ENCODE measurements at regions of chr5 and their contacts with region 1.

Region 1: DNA sequence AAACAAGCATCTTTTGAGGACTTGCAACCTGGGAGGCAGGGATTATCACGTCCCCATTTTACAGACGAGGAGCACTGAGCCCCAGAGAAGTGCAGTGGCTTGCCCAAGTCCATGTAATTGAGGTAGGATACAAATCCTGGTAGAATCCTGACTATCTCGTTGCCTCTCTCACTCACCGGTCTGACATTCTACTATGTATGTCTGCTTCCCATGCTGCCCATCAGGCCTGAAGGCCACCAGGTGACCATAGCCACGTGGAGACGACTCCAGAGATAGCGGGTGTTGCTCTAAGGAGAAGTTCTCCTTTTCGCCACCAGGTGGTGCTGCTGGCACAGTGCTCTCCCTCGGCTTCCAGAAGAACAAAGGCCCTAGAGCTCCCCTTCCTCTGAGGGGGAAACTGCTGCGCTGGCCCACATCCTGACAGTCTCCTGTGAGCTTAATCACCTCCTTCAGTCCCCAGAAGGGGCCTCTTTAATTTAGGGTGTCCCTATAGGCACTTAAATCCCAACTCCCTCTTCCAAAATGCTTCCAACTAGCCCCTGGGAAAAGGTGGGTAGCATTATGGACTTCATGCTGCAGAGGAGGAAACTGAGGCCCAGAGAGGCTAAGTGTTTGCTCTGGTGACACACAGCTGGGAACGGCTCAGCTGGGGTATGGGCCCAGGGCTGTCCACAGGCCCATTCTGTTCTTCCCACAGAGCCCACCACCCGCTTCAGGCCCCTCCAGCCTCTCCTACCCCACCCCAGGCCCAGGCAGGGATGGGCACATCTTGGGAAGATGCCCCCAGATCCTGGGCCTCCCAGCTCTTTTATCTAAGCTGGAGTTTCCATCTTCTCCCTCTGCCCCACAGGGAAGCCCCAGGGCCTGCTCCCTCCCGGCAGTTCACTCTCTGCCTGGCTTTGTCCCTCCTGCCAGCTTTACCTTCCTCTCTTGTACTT is 6.4 kb downstream of the SLC34A1 start:
- DNase-seq: peak; percentile 95
- H3K4me3 ChIP-seq: no peak overlapping the region; a peak in 1 of 4 replicates
- H3K27ac ChIP-seq: no peak overlapping the region
- H3K4me1 ChIP-seq: peaks cover 0 to 3% of the 10 kb centered on the region in 2 experiments; a peak in 1 of 4 replicates
- H3K27me3 ChIP-seq: no peaks in the 10 kb centered on the region
- CTCF ChIP-seq: peak; percentile 88
- EP300 ChIP-seq: no peak
- RAD21 ChIP-seq: peak; percentile 95

Region 2: GRCh38 chr5:177049285-177049684 is 341.3 kb before region 1 on chr5:
- CTCF ChIA-PET with region 1: no interaction called
- POLR2A ChIA-PET with region 1: no interaction called
- DNase-seq: no peak
- H3K4me3 ChIP-seq: peak overlapping the region in 1 of 2 experiments; percentile 1; a peak in 1 of 4 replicates
- H3K27ac ChIP-seq: no peak overlapping the region
- H3K4me1 ChIP-seq: no peaks in the 10 kb centered on the region
- H3K27me3 ChIP-seq: no peaks in the 10 kb centered on the region
- CTCF ChIP-seq: no peak
- EP300 ChIP-seq: no peak
- RAD21 ChIP-seq: peak; percentile 25; the same call in 1 of the 2 replicates

Region 3: DNA sequence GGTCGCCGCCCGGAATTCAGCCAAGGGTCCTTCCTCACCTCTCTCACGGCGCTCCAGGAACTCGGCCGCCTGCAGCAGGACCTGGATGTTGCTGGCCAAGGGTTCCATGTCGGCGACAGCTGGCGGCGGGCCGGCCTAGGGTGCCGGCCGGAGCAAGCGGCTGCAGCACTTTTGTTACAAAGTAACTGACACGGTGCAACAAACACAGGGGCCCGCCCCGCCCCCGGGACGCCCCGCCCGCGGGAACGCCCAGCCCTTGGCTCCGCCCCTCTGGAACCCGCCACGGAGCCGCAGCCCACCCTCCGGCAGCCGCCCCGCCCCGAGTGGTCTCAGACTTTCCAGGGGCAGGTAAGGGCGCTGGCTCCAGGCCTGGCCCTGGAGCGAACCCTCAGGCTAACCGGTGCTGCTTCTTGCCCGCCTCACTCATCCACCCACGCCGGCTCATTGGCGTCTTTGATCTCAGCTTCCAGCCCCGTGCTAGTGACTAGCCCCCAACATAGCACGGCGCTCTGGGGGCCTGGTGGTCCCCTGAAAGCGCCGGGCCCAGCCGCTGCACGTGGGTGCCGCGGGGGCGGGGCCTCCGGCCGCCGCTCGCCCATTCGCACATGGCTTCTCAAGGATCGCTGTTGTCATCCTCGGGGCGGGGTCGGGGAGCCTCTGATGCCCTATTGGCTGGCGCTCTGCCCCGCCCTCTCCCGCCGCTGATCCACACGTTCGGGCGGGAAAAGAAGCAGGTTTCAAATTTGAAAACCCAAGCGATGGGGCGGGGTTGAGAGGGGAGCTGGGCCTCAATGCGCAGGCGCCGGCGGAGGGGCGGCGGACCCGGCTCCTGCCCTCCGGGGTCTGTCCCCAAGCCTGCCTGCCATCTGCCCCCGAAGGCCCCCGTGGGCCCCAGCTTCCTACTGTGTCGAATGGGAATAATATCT is 78.6 kb before region 1 on chr5 and contains the start of gene MXD3:
- CTCF ChIA-PET with region 1: interaction called, 19 read pairs
- POLR2A ChIA-PET with region 1: no interaction called
- DNase-seq: peak; percentile 97
- H3K4me3 ChIP-seq: peak within 1 kb of the TSS; percentile 59 to 84
- H3K27ac ChIP-seq: peak within 1 kb of the TSS; percentile 73 to 88
- H3K4me1 ChIP-seq: peaks cover 4 to 25% of the 10 kb centered on the region in 2 experiments; a peak in 1 of 4 replicates
- H3K27me3 ChIP-seq: no peaks in the 10 kb centered on the region
- CTCF ChIP-seq: no peak
- EP300 ChIP-seq: 0 out of 4 replicates have a peak, but pooled peaks of 1 of the 2 experiments have one; percentile 39
- RAD21 ChIP-seq: no peak
- polyA plus RNA-seq, gene MXD3: 22.6 and 23.1 TPM in 2 replicates

Region 4: GRCh38 chr5:177351385-177352329 is 39.0 kb before region 1 on chr5 and contains the start of gene LMAN2:
- CTCF ChIA-PET with region 1: interaction called, 10 read pairs
- POLR2A ChIA-PET with region 1: no interaction called
- DNase-seq: peak; percentile 95
- H3K4me3 ChIP-seq: peak within 1 kb of the TSS; percentile 96 to 100
- H3K27ac ChIP-seq: peak within 1 kb of the TSS; percentile 98
- H3K4me1 ChIP-seq: peaks cover 5 to 23% of the 10 kb centered on the region in 2 experiments; a peak in 3 of 4 replicates
- H3K27me3 ChIP-seq: no peaks in the 10 kb centered on the region
- CTCF ChIP-seq: no peak
- EP300 ChIP-seq: no peak
- RAD21 ChIP-seq: no peak
- polyA plus RNA-seq, gene LMAN2: 380 and 500 TPM in 2 replicates

Region 5: GRCh38 chr5:177440211-177440971 is 49.8 kb after region 1 on chr5:
- CTCF ChIA-PET with region 1: interaction called, 318 read pairs
- POLR2A ChIA-PET with region 1: interaction called, 4 read pairs
- DNase-seq: no peak
- H3K4me3 ChIP-seq: no peak overlapping the region
- H3K27ac ChIP-seq: peak overlapping the region in 1 of 2 experiments; percentile 31; a peak in 1 of 4 replicates
- H3K4me1 ChIP-seq: peaks cover 0 to 8% of the 10 kb centered on the region in 2 experiments; a peak in 1 of 4 replicates
- H3K27me3 ChIP-seq: no peaks in the 10 kb centered on the region
- CTCF ChIP-seq: no peak
- EP300 ChIP-seq: no peak
- RAD21 ChIP-seq: no peak

Region 6: GRCh38 chr5:177537389-177538361 is 147.0 kb after region 1 on chr5:
- CTCF ChIA-PET with region 1: no interaction called
- POLR2A ChIA-PET with region 1: no interaction called
- DNase-seq: no peak
- H3K4me3 ChIP-seq: no peak overlapping the region
- H3K27ac ChIP-seq: peak overlapping the region; percentile 68 to 72; a peak in 3 of 4 replicates
- H3K4me1 ChIP-seq: peaks cover under 1 to 15% of the 10 kb centered on the region in 2 experiments; a peak in 2 of 4 replicates
- H3K27me3 ChIP-seq: no peaks in the 10 kb centered on the region
- CTCF ChIP-seq: no peak
- EP300 ChIP-seq: no peak
- RAD21 ChIP-seq: no peak